Heart left ventricle (tissue), 16 donors: ENCODE measurements at regions of chr2 and their contacts with region 1.

Region 1: GRCh38 chr2:189783927-189784867 is at the starts of genes ORMDL1 and PMS1:
- DNase-seq: peak; percentile 95 to 98 (median 97)
- ATAC-seq: peak; percentile 97 to 99 (median 98)
- H3K4me3 ChIP-seq: peak within 1 kb of the TSS; percentile 65 to 92 (median 80)
- H3K27ac ChIP-seq: peak within 1 kb of the TSS; percentile 90 to 98 (median 96)
- H3K4me1 ChIP-seq: peaks cover 3 to 45% (median 28%) of the 10 kb centered on the region in 12 donors
- H3K27me3 ChIP-seq: no peaks in the 10 kb centered on the region
- CTCF ChIP-seq: peak in 1 of 12 donors; percentile 8
- POLR2A ChIP-seq: peak in 1 of 2 donors; percentile 92
- total RNA-seq, gene ORMDL1: 14.3 to 32.9 (median 26.2) TPM
- total RNA-seq, gene PMS1: 6.4 to 16.7 (median 10.7) TPM

Region 2: DNA sequence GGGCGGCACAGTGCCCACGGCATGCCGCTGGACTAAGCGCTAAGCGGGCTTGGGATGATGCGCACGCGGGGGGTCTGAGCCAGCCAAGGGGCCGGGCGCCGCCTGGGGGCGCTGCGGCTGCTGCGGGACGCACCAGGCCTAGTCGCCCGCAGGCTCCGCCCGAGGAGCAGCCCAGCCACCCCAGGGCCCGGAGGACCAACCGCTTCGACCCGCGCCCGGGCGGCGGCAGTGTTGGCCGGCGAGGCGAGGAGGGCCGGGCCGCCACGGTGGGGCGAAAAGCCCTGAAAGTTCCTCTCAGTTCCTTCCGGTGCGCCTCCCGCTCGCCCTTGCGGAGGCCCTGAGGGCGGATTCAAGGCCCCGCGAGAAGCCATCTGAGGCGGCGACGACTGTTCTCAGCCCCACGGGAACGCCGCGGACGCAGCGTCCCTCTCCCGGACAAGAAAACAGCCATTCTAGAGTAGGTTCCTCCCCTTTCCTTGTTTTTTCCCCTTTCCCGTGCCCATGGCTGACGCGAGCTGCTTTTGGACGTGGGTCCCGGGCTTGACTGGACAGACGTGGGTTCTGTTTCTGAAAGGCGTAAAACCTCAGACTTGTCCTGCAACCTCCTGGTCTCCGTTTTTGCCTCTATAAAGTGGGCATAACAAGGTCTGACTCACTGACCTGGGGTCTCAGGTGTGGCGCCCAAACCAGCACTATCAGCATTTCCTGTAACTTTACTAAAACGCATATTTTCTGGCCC is 109.7 kb before region 1 on chr2 and contains the start of gene ANKAR:
- intact Hi-C with region 1: loop called in 1 of 10 experiments (anchors 10 kb)
- DNase-seq: peak; percentile 90 to 96 (median 93)
- ATAC-seq: peak; percentile 95 to 99 (median 98)
- H3K4me3 ChIP-seq: peak within 1 kb of the TSS; percentile 39 to 81 (median 70)
- H3K27ac ChIP-seq: peak within 1 kb of the TSS; percentile 88 to 100 (median 96)
- H3K4me1 ChIP-seq: peaks cover 0 to 27% (median 15%) of the 10 kb centered on the region in 12 donors
- H3K27me3 ChIP-seq: no peaks in the 10 kb centered on the region
- CTCF ChIP-seq: peak; percentile 67 to 98 (median 92)
- POLR2A ChIP-seq: no peak
- total RNA-seq, gene ANKAR: 1.8 to 10.1 (median 6.4) TPM

Region 3: GRCh38 chr2:189762551-189763298 is 21.5 kb before region 1 on chr2 and contains the start of gene OSGEPL1:
- intact Hi-C with region 1: loop called in 2 of 10 experiments (anchors 1 to 2 kb)
- DNase-seq: peak; percentile 93 to 96 (median 95)
- ATAC-seq: peak; percentile 96 to 98 (median 98)
- H3K4me3 ChIP-seq: peak within 1 kb of the TSS; percentile 69 to 90 (median 78)
- H3K27ac ChIP-seq: peak within 1 kb of the TSS; percentile 20 to 97 (median 86)
- H3K4me1 ChIP-seq: peaks cover 0 to 19% (median 12%) of the 10 kb centered on the region in 12 donors
- H3K27me3 ChIP-seq: no peaks in the 10 kb centered on the region
- CTCF ChIP-seq: peak in 10 of 12 donors; percentile 28 to 73 (median 57)
- POLR2A ChIP-seq: peak in 1 of 2 donors; percentile 38
- total RNA-seq, gene OSGEPL1: 6.8 to 11.0 (median 8.6) TPM